Heart right ventricle (tissue), 16 donors: ENCODE measurements at regions of chr4 and their contacts with region 1.

Region 1: DNA sequence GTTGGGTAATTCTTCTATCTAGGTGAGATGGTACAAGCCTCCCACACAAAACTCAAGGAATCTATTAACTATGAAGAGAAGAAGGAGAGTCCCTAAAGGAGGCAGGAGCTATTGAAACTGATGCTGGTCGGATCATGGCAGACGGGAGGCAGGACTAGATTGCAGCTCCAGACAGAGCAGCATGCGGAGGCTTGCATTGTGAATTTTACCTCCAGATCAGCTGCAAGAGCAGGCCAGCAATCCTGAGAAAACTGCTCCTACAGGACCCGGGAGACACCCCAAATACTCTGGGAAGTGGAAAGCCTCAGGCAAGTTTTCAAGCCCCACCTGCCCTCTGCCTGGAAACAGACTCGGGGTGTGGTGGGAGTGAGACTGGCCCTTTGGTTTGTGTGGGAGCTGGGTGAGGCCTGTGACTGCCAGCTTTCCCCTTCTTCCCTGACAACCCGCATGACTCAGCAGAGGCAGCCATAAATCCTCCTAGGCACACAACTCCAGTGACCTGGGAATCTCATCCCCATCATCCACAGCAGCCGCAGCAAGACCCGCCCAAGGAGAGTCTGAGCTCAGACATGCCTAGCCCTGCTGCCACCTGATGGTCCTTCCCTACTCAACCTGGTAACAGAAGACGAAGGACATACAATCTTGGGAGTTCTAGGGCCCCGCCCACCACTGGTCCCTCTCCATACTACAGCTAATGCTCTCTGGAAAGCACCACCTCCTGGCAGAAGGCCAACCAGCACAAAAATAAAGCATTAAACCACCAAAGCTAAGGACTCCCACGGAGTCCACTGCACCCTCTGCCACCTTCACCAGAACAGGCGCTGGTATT is 30.9 kb downstream of the GATB start:
- DNase-seq: no peak
- ATAC-seq: no peak
- H3K4me3 ChIP-seq: no peak overlapping the region
- H3K27ac ChIP-seq: no peak overlapping the region
- H3K4me1 ChIP-seq: no peaks in the 10 kb centered on the region
- H3K27me3 ChIP-seq: no peaks in the 10 kb centered on the region
- CTCF ChIP-seq: no peak

Region 2: DNA sequence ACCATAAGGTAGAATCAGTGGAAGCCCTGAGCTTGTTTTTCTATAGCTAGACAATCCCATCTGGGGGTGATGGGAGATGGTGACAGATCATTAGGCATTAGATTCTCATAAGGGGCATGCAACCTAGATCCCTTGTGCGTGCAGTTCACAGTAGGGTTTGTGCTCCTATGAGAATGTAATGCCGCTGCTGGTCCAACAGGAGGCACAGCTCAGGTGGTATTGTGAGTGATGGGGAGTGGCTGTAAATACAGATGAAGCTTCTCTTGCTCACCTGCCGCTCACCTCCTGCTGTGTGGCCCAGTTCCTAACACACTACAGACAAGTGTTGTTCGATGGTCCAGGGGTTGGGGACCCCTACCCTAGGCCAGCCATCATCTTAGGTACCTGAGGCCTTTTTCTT is 36.8 kb after region 1 on chr4:
- intact Hi-C with region 1: loop called in 1 of 10 experiments (anchors 1 kb)
- DNase-seq: no peak
- ATAC-seq: no peak
- H3K4me3 ChIP-seq: no peak overlapping the region
- H3K27ac ChIP-seq: no peak overlapping the region
- H3K4me1 ChIP-seq: peaks cover 0 to 11% (median 0%) of the 10 kb centered on the region in 9 donors
- H3K27me3 ChIP-seq: peaks cover 0 to 6% (median 0%) of the 10 kb centered on the region in 7 donors
- CTCF ChIP-seq: no peak

Region 3: DNA sequence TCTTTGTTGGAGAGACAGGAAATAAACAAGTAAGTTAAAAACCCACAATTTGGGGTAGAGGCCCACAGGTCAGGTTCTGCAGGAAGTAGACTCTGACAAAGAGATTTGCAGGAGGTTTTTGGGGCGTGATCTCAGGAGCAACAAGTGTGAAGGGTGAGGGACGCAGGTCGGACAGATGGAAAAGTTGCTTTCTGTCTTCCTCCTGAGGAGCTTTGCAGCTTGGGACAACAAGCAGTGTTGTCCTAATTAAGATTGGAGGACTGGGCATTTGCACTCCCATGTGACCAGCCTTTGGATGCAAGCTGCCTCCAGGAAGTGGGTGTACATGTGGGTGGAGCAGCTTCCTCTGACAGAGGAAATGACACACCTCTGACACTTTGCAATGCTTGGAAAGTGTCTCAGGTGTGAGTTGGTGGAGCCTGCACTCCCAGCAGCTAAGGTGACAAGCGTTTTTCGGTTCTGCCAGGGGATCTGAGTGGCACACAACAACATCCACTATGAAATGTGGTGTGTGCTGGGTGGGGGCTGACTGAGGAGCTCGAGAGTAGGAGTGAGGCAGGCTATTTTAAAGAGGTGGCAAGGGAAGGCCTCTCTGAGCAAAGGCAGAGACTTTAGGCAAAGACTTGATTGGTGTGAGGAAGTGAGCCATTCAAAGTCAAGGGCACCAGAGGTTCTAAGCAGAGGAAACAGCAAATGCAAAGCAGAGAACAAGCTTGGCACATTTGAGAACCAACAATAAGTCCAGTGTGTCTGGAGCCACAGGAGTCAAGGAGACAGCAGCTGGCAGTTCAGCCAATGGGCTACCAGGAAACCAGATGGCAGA is 370.6 kb after region 1 on chr4:
- intact Hi-C with region 1: no loop called
- DNase-seq: no peak
- ATAC-seq: peak in 7 of 8 donors; percentile 34 to 73 (median 45)
- H3K4me3 ChIP-seq: peak overlapping the region in 1 of 10 donors; percentile 7
- H3K27ac ChIP-seq: peak overlapping the region in 6 of 10 donors; percentile 27 to 86 (median 35)
- H3K4me1 ChIP-seq: peaks cover 0 to 48% (median 20%) of the 10 kb centered on the region in 9 donors
- H3K27me3 ChIP-seq: no peaks in the 10 kb centered on the region
- CTCF ChIP-seq: no peak